Right ventricle myocardium superior (tissue), 1 donor: ENCODE measurements at regions of chr1 and their contacts with region 1.

Region 1: GRCh38 chr1:160101037-160101716 is 2.8 kb upstream of the IGSF8 start:
- DNase-seq: peak; percentile 87
- ATAC-seq: peak; percentile 48

Region 2: GRCh38 chr1:159775716-159776115 is 325.5 kb before region 1 on chr1:
- intact Hi-C with region 1: no loop called
- DNase-seq: no peak
- ATAC-seq: no peak

Region 3: GRCh38 chr1:160226623-160227022 is 125.4 kb after region 1 on chr1:
- intact Hi-C with region 1: no loop called
- DNase-seq: no peak
- ATAC-seq: peak; percentile 54

Region 4: GRCh38 chr1:160251687-160252526 is 150.7 kb after region 1 on chr1:
- intact Hi-C with region 1: loop called (anchors 5 kb)
- DNase-seq: no peak
- ATAC-seq: peak; percentile 93

Region 5: DNA sequence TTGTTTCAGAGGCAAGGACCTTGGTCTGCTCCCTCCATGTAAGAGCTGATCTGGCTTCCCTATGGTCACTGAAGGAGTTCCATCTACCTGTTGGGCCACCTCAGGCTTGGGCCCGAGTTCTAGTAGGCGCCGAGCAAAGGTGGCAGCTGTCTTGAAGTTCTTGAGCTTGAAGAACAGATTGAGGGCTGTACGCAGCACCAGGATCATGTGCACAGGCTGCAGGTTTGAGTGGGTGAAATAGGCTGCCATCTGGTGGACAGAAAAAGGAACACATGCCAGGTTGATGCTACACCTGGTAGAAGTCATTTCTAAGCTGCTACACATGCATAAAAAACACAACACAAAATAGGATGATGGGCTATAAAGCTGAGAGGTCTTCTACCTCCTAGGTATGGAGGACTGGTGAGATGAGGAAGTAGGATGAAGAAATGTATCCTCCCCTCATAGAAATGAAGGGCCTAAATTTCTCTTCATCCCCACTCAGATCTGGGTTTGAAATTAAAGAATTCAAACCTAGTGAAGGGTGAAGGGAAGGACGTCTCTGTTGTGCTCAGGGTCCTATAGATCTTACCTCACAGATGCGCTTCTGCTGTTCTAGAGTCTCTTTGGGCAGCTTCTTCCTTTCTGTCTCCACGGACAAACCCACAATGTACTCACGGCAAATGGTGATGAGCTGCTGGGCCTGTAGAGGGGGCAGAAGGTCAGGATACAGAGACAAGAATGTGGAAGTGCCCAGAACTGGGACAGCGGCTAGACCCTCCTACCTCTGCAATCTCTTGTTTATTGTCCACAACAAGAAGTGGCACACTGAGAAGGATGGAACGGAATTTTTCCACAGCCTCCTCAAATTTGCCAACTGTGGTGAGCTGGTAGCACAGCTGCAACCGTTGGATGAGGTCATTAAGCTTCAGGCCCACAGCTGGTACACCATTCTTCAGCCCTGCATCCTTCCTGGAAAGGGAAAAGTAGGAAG is 190.4 kb after region 1 on chr1:
- intact Hi-C with region 1: loop called (anchors 2 kb)
- DNase-seq: peak; percentile 60
- ATAC-seq: peak; percentile 88